PC-9 (cell line): ENCODE measurements at regions of chr3 and their contacts with region 1.

Region 1: DNA sequence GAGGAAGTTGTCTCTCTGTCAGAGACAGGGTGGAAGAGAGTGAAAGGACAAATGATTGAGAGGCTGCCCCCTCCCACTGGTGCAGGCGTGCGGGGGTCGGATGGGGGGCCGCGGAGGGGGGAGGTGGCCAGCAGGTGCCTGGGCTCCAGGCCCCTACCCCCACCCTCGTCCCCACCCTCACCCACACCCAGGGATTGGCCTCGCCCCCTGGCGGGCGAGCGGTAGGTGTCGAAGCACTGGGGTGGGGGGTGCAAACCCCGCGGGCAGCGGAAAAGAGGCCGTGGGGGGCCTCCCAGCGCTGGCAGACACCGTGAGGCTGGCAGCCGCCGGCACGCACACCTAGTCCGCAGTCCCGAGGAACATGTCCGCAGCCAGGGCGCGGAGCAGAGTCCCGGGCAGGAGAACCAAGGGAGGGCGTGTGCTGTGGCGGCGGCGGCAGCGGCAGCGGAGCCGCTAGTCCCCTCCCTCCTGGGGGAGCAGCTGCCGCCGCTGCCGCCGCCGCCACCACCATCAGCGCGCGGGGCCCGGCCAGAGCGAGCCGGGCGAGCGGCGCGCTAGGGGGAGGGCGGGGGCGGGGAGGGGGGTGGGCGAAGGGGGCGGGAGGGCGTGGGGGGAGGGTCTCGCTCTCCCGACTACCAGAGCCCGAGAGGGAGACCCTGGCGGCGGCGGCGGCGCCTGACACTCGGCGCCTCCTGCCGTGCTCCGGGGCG is at the start of gene KAT2B:
- DNase-seq: peak in 1 of 2 experiments; percentile 67
- H3K4me3 ChIP-seq: peak within 1 kb of the TSS; percentile 80
- H3K27ac ChIP-seq: no peak within 1 kb of the TSS
- H3K4me1 ChIP-seq: peaks cover 26% of the 10 kb centered on the region
- H3K27me3 ChIP-seq: no peaks in the 10 kb centered on the region
- CTCF ChIP-seq: peak; percentile 79
- total RNA-seq, gene KAT2B: 2.5 and 3.2 TPM in 2 replicates

Region 2: GRCh38 chr3:19190602-19191001 is 849.3 kb before region 1 on chr3:
- CTCF ChIA-PET with region 1: no interaction called
- POLR2A ChIA-PET with region 1: no interaction called
- intact Hi-C with region 1: no loop called
- DNase-seq: no peak
- H3K4me3 ChIP-seq: no peak overlapping the region
- H3K27ac ChIP-seq: no peak overlapping the region
- H3K4me1 ChIP-seq: no peaks in the 10 kb centered on the region
- H3K27me3 ChIP-seq: no peaks in the 10 kb centered on the region
- CTCF ChIP-seq: no peak

Region 3: GRCh38 chr3:19946832-19947548 is 92.9 kb before region 1 on chr3 and contains the start of gene RAB5A:
- CTCF ChIA-PET with region 1: no interaction called
- POLR2A ChIA-PET with region 1: no interaction called
- intact Hi-C with region 1: loop called (anchors 2 kb)
- DNase-seq: peak; percentile 91 to 96
- H3K4me3 ChIP-seq: peak within 1 kb of the TSS; percentile 69
- H3K27ac ChIP-seq: peak within 1 kb of the TSS; percentile 97
- H3K4me1 ChIP-seq: peaks cover 32% of the 10 kb centered on the region
- H3K27me3 ChIP-seq: no peaks in the 10 kb centered on the region
- CTCF ChIP-seq: no peak
- total RNA-seq, gene RAB5A: 62.7 and 65.1 TPM in 2 replicates

Region 4: GRCh38 chr3:19972051-19972454 is 67.9 kb before region 1 on chr3:
- CTCF ChIA-PET with region 1: no interaction called
- POLR2A ChIA-PET with region 1: no interaction called
- intact Hi-C with region 1: loop called (anchors 5 kb)
- DNase-seq: peak in 1 of 2 experiments; percentile 92
- H3K4me3 ChIP-seq: no peak overlapping the region
- H3K27ac ChIP-seq: peak overlapping the region; percentile 55
- H3K4me1 ChIP-seq: peaks cover 33% of the 10 kb centered on the region
- H3K27me3 ChIP-seq: no peaks in the 10 kb centered on the region
- CTCF ChIP-seq: no peak

Region 5: GRCh38 chr3:20054549-20054987 is 14.6 kb after region 1 on chr3:
- CTCF ChIA-PET with region 1: no interaction called
- POLR2A ChIA-PET with region 1: no interaction called
- intact Hi-C with region 1: loop called (anchors 1 kb)
- DNase-seq: peak; percentile 83 to 96
- H3K4me3 ChIP-seq: no peak overlapping the region
- H3K27ac ChIP-seq: 0 out of 2 replicates have a peak overlapping the region, but pooled peaks have one; percentile 7
- H3K4me1 ChIP-seq: peaks cover 45% of the 10 kb centered on the region
- H3K27me3 ChIP-seq: no peaks in the 10 kb centered on the region
- CTCF ChIP-seq: no peak

Region 6: DNA sequence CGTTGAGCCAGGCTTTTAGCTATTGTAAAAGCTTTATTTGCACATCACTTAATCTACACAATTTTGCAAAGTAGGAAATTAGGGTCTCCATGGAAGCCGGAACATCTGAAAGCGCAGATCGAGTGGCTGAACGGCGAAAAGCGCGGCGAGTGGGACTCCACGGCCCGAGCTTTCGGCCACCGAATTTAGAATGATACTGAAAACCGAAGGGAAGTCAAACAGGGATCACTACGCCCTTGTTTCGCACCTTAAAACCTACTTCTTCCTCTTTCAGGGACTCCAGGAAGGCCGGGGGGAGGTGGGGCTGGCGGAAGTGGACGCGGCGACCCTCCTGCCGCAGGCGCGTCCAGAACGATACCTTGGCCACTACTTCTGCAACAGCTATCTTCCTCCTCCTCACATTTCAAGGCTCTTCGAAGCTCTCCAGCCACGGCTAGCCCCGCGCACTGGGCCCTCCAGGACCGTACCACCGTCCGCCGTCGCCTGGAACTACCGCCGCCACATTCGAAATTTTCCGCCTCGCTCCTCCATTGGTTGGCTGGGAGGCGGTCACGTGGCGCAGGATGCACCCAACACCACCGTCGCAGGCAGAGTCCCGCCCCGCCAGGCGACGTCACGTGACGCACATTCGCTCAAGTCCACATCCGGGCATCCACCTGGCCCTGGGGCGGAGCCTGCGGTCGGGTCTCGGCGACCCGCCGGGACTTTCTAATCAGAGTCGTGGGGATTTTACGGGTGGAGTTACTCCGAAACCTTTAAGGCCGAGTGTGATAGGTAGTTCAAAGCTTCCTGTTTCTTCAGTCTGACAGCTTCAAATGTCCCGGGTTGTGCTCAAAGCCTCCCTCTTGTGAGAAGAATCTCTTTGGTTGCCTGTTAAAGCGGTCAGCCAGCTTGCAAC is 146.0 kb after region 1 on chr3 and contains the start of gene SGO1:
- CTCF ChIA-PET with region 1: no interaction called
- POLR2A ChIA-PET with region 1: interaction called, 18 read pairs
- intact Hi-C with region 1: loop called (anchors 2 kb)
- DNase-seq: peak; percentile 91 to 98
- H3K4me3 ChIP-seq: peak within 1 kb of the TSS; percentile 93
- H3K27ac ChIP-seq: peak within 1 kb of the TSS; percentile 88
- H3K4me1 ChIP-seq: peaks cover 27% of the 10 kb centered on the region
- H3K27me3 ChIP-seq: no peaks in the 10 kb centered on the region
- CTCF ChIP-seq: no peak
- total RNA-seq, gene SGO1: 18.3 and 26.3 TPM in 2 replicates

Region 7: DNA sequence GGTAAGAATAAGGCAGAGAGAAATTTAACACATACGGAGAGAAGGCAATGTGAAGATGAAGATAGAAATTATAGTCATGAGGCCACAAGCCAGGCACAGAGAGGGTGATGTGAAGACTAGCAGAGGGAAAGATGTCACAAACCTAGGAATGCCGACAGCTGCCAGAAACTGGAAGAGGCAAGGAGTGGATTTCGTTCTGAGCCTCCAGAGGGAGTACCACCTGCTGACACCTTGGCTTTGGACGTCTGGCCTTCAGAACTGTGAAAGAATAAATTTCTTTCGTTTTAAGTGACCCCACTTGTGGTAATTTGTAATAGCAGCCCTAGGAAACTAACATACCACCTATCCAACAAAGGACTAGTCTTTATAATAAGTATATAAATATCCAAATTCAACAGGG is 151.1 kb after region 1 on chr3:
- CTCF ChIA-PET with region 1: no interaction called
- POLR2A ChIA-PET with region 1: interaction called, 18 read pairs
- intact Hi-C with region 1: loop called (anchors 2 kb)
- DNase-seq: no peak
- H3K4me3 ChIP-seq: no peak overlapping the region
- H3K27ac ChIP-seq: no peak overlapping the region
- H3K4me1 ChIP-seq: peaks cover 13% of the 10 kb centered on the region
- H3K27me3 ChIP-seq: no peaks in the 10 kb centered on the region
- CTCF ChIP-seq: no peak

Region 8: GRCh38 chr3:20218215-20218614 is 178.3 kb after region 1 on chr3:
- CTCF ChIA-PET with region 1: interaction called, 11 read pairs
- POLR2A ChIA-PET with region 1: no interaction called
- intact Hi-C with region 1: no loop called
- DNase-seq: no peak
- H3K4me3 ChIP-seq: no peak overlapping the region
- H3K27ac ChIP-seq: no peak overlapping the region
- H3K4me1 ChIP-seq: no peaks in the 10 kb centered on the region
- H3K27me3 ChIP-seq: no peaks in the 10 kb centered on the region
- CTCF ChIP-seq: no peak